Activated CD8-positive, alpha-beta memory T cell treated with anti-CD3 and anti-CD28 coated beads, Interleukin-2, amount 10 ng/mL, durations not matched to agents 7 days and 5 days (primary cell): ENCODE measurements at regions of chr11 and their contacts with region 1.

Region 1: DNA sequence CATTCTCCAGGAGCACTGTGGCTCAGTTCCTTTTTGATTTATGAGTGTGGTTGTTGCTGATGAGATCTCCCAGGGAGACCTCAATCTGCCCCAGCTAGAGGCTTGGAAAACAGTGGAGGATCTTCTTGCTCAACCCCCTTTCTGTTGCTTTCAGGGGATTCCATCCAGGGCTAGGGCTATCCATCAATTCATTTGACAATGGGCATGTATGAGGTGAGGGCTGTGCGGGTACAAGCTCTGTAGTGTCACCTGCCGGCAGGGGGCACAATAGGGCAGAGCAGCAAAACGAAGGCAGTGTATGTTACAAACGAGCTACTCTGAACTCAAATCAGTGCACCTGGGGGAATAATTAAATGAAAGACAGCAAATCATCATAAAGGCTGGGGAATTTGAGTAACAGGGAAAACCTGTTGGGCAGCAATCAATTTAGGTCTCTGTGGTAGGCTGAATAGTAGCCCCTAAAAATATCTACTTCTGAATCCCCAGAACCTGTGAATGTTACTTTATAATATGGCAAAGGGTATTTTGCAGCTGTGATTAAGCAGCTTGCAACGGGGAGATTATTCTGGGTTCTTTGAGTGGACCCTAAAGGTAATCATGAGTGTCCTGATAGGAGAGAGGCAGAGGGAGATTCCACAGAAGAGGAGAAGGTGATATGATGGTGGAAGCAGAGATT is 170.3 kb upstream of the ZBED5 start:
- DNase-seq: peak; percentile 78
- ATAC-seq: peak; percentile 89
- H3K4me3 Mint-ChIP-seq: no peak overlapping the region
- H3K27ac Mint-ChIP-seq: no peak overlapping the region
- H3K4me1 Mint-ChIP-seq: no peaks in the 10 kb centered on the region
- H3K27me3 Mint-ChIP-seq: peaks cover 13% of the 10 kb centered on the region

Region 2: DNA sequence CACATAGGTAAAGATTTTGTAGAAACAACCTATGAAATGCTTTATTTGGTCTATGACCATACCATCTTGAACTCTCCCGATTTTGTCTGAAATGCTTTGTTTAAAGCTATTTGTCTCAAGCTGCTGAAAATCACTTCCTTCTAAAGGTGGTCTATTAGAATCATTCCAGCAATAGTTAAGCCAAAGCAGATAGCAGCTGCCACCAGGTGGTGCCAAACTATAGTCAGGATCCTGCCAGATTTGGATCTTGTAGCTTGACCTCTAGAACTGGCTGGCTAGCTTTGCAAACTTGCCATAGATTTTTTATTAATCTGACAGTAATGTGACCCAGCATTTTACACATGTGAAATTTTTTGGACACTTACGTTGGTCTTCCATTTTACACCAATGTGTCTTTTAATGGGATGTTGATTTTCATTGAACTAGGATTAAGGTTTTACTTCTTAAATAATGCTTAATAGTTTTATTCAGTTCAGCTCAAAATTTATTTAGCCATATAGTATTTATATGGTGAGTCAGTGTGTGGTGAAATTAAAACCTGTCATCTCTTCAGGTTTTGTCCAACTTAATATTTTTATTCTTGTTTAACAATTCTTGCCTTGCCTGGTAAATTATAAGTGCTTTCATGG is 257.4 kb before region 1 on chr11:
- CTCF ChIA-PET with region 1: interaction called, 13 read pairs
- DNase-seq: peak; percentile 50
- ATAC-seq: no peak
- H3K4me3 Mint-ChIP-seq: no peak overlapping the region
- H3K27ac Mint-ChIP-seq: no peak overlapping the region
- H3K4me1 Mint-ChIP-seq: peaks cover 2% of the 10 kb centered on the region
- H3K27me3 Mint-ChIP-seq: no peaks in the 10 kb centered on the region

Region 3: GRCh38 chr11:11157185-11157584 is 129.0 kb after region 1 on chr11:
- CTCF ChIA-PET with region 1: interaction called, 17 read pairs
- DNase-seq: peak; percentile 54
- ATAC-seq: peak; percentile 39
- H3K4me3 Mint-ChIP-seq: no peak overlapping the region
- H3K27ac Mint-ChIP-seq: no peak overlapping the region
- H3K4me1 Mint-ChIP-seq: peaks cover 9% of the 10 kb centered on the region
- H3K27me3 Mint-ChIP-seq: no peaks in the 10 kb centered on the region

Region 4: GRCh38 chr11:11787305-11788062 is 759.3 kb after region 1 on chr11:
- CTCF ChIA-PET with region 1: interaction called, 37 read pairs
- DNase-seq: peak; percentile 73
- ATAC-seq: peak; percentile 85
- H3K4me3 Mint-ChIP-seq: no peak overlapping the region
- H3K27ac Mint-ChIP-seq: no peak overlapping the region
- H3K4me1 Mint-ChIP-seq: peaks cover 12% of the 10 kb centered on the region
- H3K27me3 Mint-ChIP-seq: peaks cover 19% of the 10 kb centered on the region